ENCODE measurements at regions of chr12 and their contacts with region 1.

Region 1: DNA sequence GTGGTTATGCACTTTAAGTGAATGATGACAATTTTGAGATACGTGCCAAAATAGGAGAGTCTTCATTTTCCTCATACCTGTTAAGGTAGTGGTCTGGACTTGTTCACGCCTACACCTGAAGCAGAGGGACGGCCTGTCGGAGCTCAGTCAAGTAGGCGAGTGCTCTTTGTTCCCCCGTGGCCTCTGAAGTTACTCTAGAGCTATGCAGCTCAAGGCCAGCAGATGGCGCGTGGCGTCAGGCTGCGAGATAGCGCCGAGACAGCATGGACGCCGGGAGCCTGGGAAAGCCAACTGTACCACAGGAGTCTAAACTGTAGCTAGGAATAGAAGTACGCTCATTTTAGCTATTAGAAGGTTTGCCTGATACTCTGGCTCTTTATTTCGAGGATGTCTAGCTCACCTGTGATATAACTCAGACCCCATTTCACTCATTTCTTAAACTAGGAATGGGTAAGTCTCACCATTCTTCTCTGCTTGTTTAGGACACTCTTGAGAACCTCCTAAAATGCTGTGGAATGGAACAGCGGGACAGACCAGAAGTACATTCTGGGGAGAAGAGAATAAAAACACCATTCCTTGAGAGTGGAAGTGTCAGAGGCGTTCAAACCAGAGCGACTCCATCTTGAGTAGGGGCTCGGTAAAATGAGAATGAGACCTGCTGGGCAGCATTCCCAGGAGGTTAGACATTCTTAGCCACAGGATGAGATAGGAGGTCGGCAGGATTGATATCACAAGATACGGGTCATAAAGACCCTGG is 267.4 kb upstream of the HMGA2 start:
- DNase-seq: peak; percentile 85
- ATAC-seq: peak; percentile 99
- H3K4me3 ChIP-seq: no peak overlapping the region
- H3K27ac ChIP-seq: no peak overlapping the region; the same call in 1 of the 2 replicates
- H3K4me1 ChIP-seq: peaks cover 13% of the 10 kb centered on the region
- H3K27me3 ChIP-seq: no peaks in the 10 kb centered on the region
- CTCF ChIP-seq: peak; percentile 91
- POLR2A ChIP-seq: peak; percentile 54; the same call in 1 of the 2 replicates
- RAD21 ChIP-seq: peak; percentile 95

Region 2: GRCh38 chr12:65673732-65674131 is 116.9 kb after region 1 on chr12:
- CTCF ChIA-PET with region 1: interaction called, 5 read pairs
- POLR2A ChIA-PET with region 1: no interaction called
- dilution Hi-C with region 1: no loop called
- in situ Hi-C with region 1: no loop called
- intact Hi-C with region 1: loop called (anchors 2 kb)
- DNase-seq: peak; percentile 51
- ATAC-seq: no peak; the same call in 1 of the 2 replicates
- H3K4me3 ChIP-seq: no peak overlapping the region
- H3K27ac ChIP-seq: no peak overlapping the region
- H3K4me1 ChIP-seq: peaks cover 17% of the 10 kb centered on the region
- H3K27me3 ChIP-seq: no peaks in the 10 kb centered on the region
- CTCF ChIP-seq: no peak; the same call in 1 of the 2 replicates
- POLR2A ChIP-seq: no peak
- RAD21 ChIP-seq: peak; percentile 45

Region 3: GRCh38 chr12:65740873-65741600 is 184.2 kb after region 1 on chr12:
- CTCF ChIA-PET with region 1: no interaction called
- POLR2A ChIA-PET with region 1: no interaction called
- dilution Hi-C with region 1: no loop called
- in situ Hi-C with region 1: no loop called
- intact Hi-C with region 1: loop called (anchors 5 kb)
- DNase-seq: peak; percentile 74
- ATAC-seq: peak; percentile 98
- H3K4me3 ChIP-seq: peak overlapping the region; percentile 83
- H3K27ac ChIP-seq: peak overlapping the region; percentile 76
- H3K4me1 ChIP-seq: peaks cover 2% of the 10 kb centered on the region; the same call in 1 of the 2 replicates
- H3K27me3 ChIP-seq: no peaks in the 10 kb centered on the region
- CTCF ChIP-seq: no peak
- POLR2A ChIP-seq: peak; percentile 52; the same call in 1 of the 2 replicates
- RAD21 ChIP-seq: no peak

Region 4: GRCh38 chr12:65881965-65882413 is 325.1 kb after region 1 on chr12:
- CTCF ChIA-PET with region 1: interaction called, 3 read pairs
- POLR2A ChIA-PET with region 1: no interaction called
- dilution Hi-C with region 1: no loop called
- in situ Hi-C with region 1: no loop called
- intact Hi-C with region 1: loop called (anchors 2 kb)
- DNase-seq: peak; percentile 38
- ATAC-seq: no peak
- H3K4me3 ChIP-seq: no peak overlapping the region
- H3K27ac ChIP-seq: peak overlapping the region; percentile 70; the same call in 1 of the 2 replicates
- H3K4me1 ChIP-seq: peaks cover 29% of the 10 kb centered on the region
- H3K27me3 ChIP-seq: no peaks in the 10 kb centered on the region
- CTCF ChIP-seq: 0 out of 2 replicates have a peak, but pooled peaks have one; percentile 1
- POLR2A ChIP-seq: no peak
- RAD21 ChIP-seq: no peak

Region 5: GRCh38 chr12:65911321-65911720 is 354.5 kb after region 1 on chr12:
- CTCF ChIA-PET with region 1: no interaction called
- POLR2A ChIA-PET with region 1: no interaction called
- dilution Hi-C with region 1: no loop called
- in situ Hi-C with region 1: no loop called
- intact Hi-C with region 1: no loop called
- DNase-seq: peak; percentile 53
- ATAC-seq: no peak
- H3K4me3 ChIP-seq: no peak overlapping the region
- H3K27ac ChIP-seq: no peak overlapping the region
- H3K4me1 ChIP-seq: peaks cover 3% of the 10 kb centered on the region
- H3K27me3 ChIP-seq: no peaks in the 10 kb centered on the region
- CTCF ChIP-seq: no peak
- POLR2A ChIP-seq: no peak
- RAD21 ChIP-seq: no peak

Region 6: DNA sequence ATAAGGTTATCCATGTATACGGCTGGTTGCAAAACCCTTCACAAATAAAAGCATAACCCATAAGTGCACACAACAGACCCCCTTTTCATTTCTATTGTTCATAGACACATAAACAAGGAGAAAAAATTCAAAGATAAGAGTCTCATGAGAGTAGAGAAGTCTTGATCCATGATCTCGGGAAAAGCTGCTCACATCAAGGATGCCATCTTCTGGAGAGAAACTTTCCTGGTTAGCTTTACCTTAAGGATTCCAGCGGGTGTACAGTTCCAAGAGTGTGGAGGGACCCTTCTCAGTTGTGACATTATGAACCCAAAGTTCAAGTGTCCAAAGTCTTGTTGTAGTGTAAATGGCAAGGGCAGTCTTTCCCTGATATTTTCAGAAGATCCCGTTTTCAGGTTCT is 429.2 kb after region 1 on chr12:
- CTCF ChIA-PET with region 1: no interaction called
- POLR2A ChIA-PET with region 1: no interaction called
- dilution Hi-C with region 1: no loop called
- in situ Hi-C with region 1: no loop called
- intact Hi-C with region 1: loop called (anchors 5 kb)
- DNase-seq: no peak
- ATAC-seq: no peak
- H3K4me3 ChIP-seq: no peak overlapping the region
- H3K27ac ChIP-seq: no peak overlapping the region
- H3K4me1 ChIP-seq: no peaks in the 10 kb centered on the region
- H3K27me3 ChIP-seq: no peaks in the 10 kb centered on the region
- CTCF ChIP-seq: no peak
- POLR2A ChIP-seq: no peak
- RAD21 ChIP-seq: no peak

Region 7: DNA sequence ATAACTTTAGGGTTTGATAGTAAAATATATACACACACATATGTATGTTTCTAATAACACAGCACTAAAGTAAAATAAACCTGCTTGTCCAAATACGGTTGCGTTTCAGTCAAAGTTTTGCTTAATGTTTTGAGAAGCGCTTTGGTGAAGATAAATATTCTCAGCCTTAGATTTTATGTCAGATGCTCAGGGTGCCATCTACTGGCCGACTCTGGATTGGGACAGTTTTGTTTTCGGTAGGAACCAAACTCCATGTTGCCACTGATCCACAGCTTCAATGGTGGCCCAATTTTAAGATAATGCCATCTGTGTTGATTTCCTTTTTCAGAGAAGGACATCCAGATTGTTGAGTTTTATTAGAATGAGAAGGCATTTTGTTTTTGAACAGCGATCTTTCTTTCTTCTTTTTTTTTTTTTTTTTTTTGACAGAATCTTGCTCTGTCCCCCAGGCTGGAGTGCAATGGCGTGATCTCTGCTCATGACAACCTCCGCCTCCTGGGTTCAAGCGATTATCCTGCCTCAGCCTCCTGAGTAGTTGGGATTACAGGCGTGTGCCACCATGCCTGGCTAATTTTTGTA is 530.6 kb after region 1 on chr12:
- CTCF ChIA-PET with region 1: no interaction called
- POLR2A ChIA-PET with region 1: no interaction called
- dilution Hi-C with region 1: no loop called
- in situ Hi-C with region 1: no loop called
- intact Hi-C with region 1: loop called (anchors 2 kb)
- DNase-seq: peak; percentile 88
- ATAC-seq: peak; percentile 93
- H3K4me3 ChIP-seq: no peak overlapping the region
- H3K27ac ChIP-seq: no peak overlapping the region
- H3K4me1 ChIP-seq: peaks cover 4% of the 10 kb centered on the region
- H3K27me3 ChIP-seq: no peaks in the 10 kb centered on the region
- CTCF ChIP-seq: peak; percentile 89
- POLR2A ChIP-seq: peak; percentile 30; the same call in 1 of the 2 replicates
- RAD21 ChIP-seq: peak; percentile 91